Right cardiac atrium (tissue), 5 donors: ENCODE measurements at regions of chr12 and their contacts with region 1.

Region 1: GRCh38 chr12:93502802-93503623 is 35.7 kb downstream of the MRPL42 start:
- DNase-seq: peak in 1 of 3 donors; percentile 30
- ATAC-seq: no peak
- H3K4me3 ChIP-seq: no peak overlapping the region
- H3K27ac ChIP-seq: no peak overlapping the region
- H3K4me1 ChIP-seq: no peaks in the 10 kb centered on the region
- H3K27me3 ChIP-seq: no peaks in the 10 kb centered on the region

Region 2: DNA sequence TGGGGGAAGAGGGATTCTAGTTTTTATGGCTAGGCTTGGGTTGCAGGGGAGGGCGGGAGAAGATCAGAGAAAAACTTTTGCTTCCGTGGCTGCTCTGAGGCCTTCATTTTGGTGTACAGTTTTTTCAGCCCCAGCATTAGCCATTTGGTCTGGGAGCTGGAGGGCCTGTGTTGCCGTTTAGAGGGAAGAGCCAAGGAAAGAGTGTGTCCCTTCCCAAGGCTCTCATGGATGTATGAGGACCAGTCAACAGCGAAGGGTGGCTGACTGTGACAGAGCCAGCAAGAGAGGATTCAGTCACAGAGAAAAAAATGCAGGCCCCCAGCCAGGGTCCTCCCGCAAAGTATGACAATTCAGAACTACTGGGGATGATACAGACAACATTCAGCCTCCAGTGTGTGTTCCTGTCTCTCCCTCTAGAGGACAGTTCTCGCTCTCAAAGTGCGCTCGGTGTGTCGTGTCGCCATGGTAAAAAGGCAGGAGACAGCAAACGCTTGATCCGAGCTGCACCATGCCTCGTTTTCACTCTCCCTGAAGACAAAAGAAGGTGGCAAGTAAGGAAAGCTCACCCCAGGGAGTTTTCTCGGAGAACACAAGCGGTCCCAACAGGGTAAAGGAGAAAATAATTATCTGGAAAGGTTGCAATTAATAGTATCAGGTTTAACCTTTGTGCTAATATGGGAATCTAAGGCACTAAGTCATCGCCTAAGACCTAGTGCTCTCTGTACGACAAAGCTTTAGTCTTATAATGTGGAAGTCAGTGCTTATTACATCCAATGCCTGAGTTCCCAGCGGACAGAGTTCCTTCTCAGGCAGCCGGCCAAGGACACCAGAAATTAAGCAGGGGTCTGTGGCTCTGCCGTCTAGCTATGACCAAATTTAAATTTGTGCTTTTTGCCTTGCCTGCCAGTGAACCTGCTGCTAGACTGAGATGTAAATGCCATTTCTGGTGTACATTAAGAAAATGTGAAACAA is 488.1 kb after region 1 on chr12:
- intact Hi-C with region 1: no loop called
- DNase-seq: peak; percentile 55 to 73 (median 64)
- ATAC-seq: peak; percentile 94 to 95
- H3K4me3 ChIP-seq: peak overlapping the region; percentile 18
- H3K27ac ChIP-seq: peak overlapping the region; percentile 36
- H3K4me1 ChIP-seq: no peaks in the 10 kb centered on the region
- H3K27me3 ChIP-seq: no peaks in the 10 kb centered on the region

Region 3: DNA sequence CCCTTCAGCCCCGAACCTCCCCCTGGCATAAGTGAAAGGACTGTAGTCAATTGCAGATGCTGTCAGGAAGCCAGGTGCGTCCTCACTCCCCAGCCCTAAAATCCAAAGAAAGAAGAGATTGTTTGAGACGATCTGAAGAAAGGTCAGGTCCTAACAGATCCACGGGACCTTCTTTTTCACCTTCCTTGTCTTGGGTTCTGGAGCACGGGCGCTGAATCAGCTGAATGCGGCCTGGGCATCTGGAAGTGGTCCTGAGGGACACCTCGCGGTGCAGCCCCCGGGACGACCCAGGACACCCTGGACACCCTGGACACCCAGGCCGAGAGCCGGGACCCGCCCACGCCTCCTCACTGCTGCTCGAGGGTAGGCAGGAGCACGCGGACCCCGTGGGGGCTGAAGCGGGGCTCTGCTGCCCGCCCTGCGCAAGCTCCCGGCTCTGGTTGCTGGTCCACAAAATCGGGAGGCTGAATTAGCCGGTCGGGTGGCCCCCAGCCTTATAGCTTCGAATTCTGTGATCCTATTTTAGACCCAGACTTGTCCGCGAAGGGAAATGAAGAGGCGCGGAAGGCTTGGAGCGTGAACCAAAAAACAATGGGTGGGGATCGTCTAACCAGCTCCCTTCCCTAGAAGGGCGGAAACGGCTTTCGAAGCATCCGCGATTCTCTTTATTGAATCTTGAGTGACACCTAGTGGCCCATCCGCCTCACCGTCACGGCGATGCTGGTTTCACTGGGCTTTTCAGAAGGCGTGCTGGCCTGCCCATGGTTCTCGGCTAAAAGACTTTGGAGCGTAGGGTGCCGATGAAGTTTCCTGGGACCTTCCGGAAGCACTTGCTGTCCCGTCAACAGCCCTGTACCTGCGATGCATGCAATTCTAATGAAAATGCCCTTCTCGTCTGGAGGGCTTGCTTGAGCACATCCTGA is 599.0 kb after region 1 on chr12:
- intact Hi-C with region 1: loop called (anchors 2 to 5 kb)
- DNase-seq: peak; percentile 87 to 95 (median 91)
- ATAC-seq: peak; percentile 91
- H3K4me3 ChIP-seq: peak overlapping the region; percentile 50
- H3K27ac ChIP-seq: no peak overlapping the region
- H3K4me1 ChIP-seq: peaks cover 3% of the 10 kb centered on the region
- H3K27me3 ChIP-seq: no peaks in the 10 kb centered on the region